ENCODE measurements at regions of chr1 and their contacts with region 1.

Region 1: DNA sequence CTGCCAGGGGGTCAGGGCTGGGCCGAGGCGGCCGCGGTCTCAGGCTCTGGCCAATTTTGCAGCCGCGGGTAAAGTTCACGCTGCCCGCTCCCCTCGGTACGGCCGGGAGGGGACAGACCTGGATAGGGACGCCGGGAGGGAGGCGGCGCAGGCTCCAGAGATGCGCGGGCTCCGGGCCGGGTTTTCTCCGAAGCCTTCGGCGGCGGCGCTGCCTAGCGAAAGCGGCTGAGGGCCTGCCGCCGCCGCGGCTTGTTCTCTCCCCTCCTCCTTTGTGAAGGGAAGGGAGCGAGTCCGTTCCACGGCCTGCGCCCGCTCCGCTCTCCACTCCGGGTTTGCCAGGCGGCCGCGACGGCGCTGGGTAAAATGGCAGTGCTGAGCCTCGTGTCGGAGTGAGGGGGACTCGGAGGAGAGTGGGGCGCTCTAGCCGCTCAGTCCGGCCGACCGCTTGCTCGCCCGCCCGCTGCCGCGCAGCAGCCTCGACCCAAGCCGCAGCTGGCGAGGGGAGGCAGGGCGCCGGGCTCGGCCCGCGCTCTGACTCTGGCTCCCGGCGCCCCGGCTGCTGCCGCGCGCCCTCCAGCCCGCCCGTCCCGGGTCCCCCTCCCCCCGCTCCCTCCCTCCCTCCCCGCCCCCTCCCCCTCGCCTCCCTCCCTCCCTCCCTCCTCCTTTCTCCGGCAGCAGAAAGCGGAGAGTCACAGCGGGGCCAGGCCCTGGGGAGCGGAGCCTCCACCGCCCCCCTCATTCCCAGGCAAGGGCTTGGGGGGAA is at the start of gene ARID1A:
- DNase-seq: peak; percentile 97
- ATAC-seq: peak; percentile 75
- total RNA-seq, gene ARID1A: 83.8 TPM

Region 2: DNA sequence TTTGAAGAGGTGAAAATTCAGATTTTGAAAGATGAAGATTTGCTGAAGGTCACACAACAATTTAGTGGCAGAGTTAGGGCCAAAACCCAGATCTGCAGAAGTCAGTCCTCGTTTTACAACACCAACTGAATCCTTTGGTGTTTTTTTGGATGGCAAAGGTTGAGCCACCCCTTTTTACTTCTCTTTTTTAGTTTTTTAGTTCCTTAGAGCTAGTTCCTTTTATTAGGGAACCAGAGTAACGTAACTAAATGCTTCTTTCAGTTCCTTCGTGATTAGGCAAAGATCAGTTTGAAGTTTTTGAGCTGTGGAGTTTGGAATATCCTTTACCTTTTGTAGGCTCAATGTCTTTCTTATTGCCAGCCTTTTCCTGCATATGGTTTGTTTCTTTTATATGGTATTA is 67.6 kb before region 1 on chr1:
- intact Hi-C with region 1: loop called (anchors 2 kb)
- DNase-seq: no peak
- ATAC-seq: no peak